ENCODE measurements at regions of chr4 and their contacts with region 1.

Region 1: GRCh38 chr4:77052352-77052751 is 23.4 kb downstream of the CCNI start:
- DNase-seq: peak; percentile 66
- ATAC-seq: no peak
- H3K4me3 Mint-ChIP-seq: no peak overlapping the region
- H3K27ac Mint-ChIP-seq: no peak overlapping the region
- H3K4me1 Mint-ChIP-seq: peaks cover 2% of the 10 kb centered on the region
- H3K27me3 Mint-ChIP-seq: no peaks in the 10 kb centered on the region

Region 2: GRCh38 chr4:77065382-77065781 is 13.0 kb after region 1 on chr4:
- CTCF ChIA-PET with region 1: interaction called, 10 read pairs
- DNase-seq: no peak
- ATAC-seq: no peak
- H3K4me3 Mint-ChIP-seq: no peak overlapping the region
- H3K27ac Mint-ChIP-seq: no peak overlapping the region
- H3K4me1 Mint-ChIP-seq: peaks cover 19% of the 10 kb centered on the region
- H3K27me3 Mint-ChIP-seq: no peaks in the 10 kb centered on the region

Measured in activated CD8-positive, alpha-beta memory T cell treated with anti-CD3 and anti-CD28 coated beads, Interleukin-2, amount 10 ng/mL, durations not matched to agents 7 days and 5 days (primary cell).